ENCODE measurements at regions of chr10 and their contacts with region 1.

Region 1: GRCh38 chr10:69639291-69640195 is 9.5 kb downstream of the FAM241B start:
- DNase-seq: peak; percentile 37 to 75 (median 68)
- ATAC-seq: peak; percentile 61
- H3K4me3 ChIP-seq: no peak overlapping the region
- H3K4me3 Mint-ChIP-seq: no peak overlapping the region
- H3K27ac ChIP-seq: no peak overlapping the region
- H3K27ac Mint-ChIP-seq: peak overlapping the region in 2 of 9 donors; percentile 9 to 10
- H3K4me1 ChIP-seq: no peaks in the 10 kb centered on the region
- H3K4me1 Mint-ChIP-seq: peaks cover 0 to 6% (median 0%) of the 10 kb centered on the region in 7 donors
- H3K27me3 ChIP-seq: no peaks in the 10 kb centered on the region
- H3K27me3 Mint-ChIP-seq: peaks cover 0 to 5% (median 0%) of the 10 kb centered on the region in 5 donors

Region 2: GRCh38 chr10:69222157-69223027 is 417.2 kb before region 1 on chr10:
- CTCF ChIA-PET with region 1: no interaction called
- POLR2A ChIA-PET with region 1: no interaction called
- intact Hi-C with region 1: no loop called
- DNase-seq: peak in 8 of 9 donors; percentile 21 to 80 (median 41)
- ATAC-seq: peak; percentile 88
- H3K4me3 ChIP-seq: peak overlapping the region; percentile 34
- H3K4me3 Mint-ChIP-seq: peak overlapping the region in 4 of 10 donors; percentile 17 to 83 (median 50)
- H3K27ac ChIP-seq: no peak overlapping the region
- H3K27ac Mint-ChIP-seq: peak overlapping the region in 4 of 9 donors; percentile 18 to 91 (median 56)
- H3K4me1 ChIP-seq: peaks cover 11 to 37% of the 10 kb centered on the region in 2 donors
- H3K4me1 Mint-ChIP-seq: peaks cover 0 to 47% (median 15%) of the 10 kb centered on the region in 7 donors
- H3K27me3 ChIP-seq: no peaks in the 10 kb centered on the region
- H3K27me3 Mint-ChIP-seq: no peaks in the 10 kb centered on the region

Region 3: DNA sequence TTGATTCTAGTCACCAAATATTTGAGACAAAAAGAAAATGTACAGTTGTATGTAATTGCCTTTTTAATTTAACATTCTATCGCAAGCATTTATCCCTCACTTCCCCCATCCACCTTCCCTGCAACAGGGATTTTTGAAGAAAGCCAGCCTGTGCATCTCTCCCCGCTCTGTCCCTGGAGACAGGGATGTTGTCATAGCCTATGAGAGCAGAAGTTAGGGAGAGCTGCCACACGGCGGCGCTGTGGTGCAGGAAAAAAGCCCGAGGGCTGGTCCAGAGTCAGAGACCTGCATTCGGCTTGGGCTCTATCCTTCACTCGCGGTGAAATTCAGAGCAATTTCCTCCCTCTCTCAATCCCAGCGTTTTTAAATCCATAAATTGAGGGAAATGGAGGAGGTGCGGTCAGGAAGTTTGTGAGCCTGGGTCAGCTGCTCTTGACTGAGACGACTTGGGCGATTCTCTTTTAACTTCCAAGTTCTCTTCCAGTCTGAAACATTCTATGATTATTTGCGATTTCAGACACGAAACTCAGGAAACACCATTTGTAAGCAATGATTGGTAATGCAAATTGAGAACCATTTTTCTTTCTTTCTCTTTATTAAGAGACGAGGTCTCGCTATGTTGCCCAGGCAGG is 401.9 kb before region 1 on chr10:
- CTCF ChIA-PET with region 1: no interaction called
- POLR2A ChIA-PET with region 1: no interaction called
- intact Hi-C with region 1: loop called (anchors 5 to 10 kb)
- DNase-seq: peak; percentile 67 to 88 (median 79)
- ATAC-seq: peak; percentile 93
- H3K4me3 ChIP-seq: no peak overlapping the region
- H3K4me3 Mint-ChIP-seq: peak overlapping the region in 4 of 10 donors; percentile 9 to 36 (median 10)
- H3K27ac ChIP-seq: no peak overlapping the region
- H3K27ac Mint-ChIP-seq: peak overlapping the region in 6 of 9 donors; percentile 2 to 78 (median 20)
- H3K4me1 ChIP-seq: peaks cover 4 to 6% of the 10 kb centered on the region in 2 donors
- H3K4me1 Mint-ChIP-seq: peaks cover 8 to 37% (median 23%) of the 10 kb centered on the region in 7 donors
- H3K27me3 ChIP-seq: no peaks in the 10 kb centered on the region
- H3K27me3 Mint-ChIP-seq: no peaks in the 10 kb centered on the region

Region 4: GRCh38 chr10:69425511-69426298 is 213.8 kb before region 1 on chr10:
- CTCF ChIA-PET with region 1: no interaction called
- POLR2A ChIA-PET with region 1: no interaction called
- intact Hi-C with region 1: loop called in 1 of 2 experiments (anchors 5 kb)
- DNase-seq: peak in 7 of 9 donors; percentile 60 to 82 (median 74)
- ATAC-seq: peak; percentile 90
- H3K4me3 ChIP-seq: peak overlapping the region; percentile 22
- H3K4me3 Mint-ChIP-seq: peak overlapping the region; percentile 4 to 64 (median 36)
- H3K27ac ChIP-seq: peak overlapping the region; percentile 54
- H3K27ac Mint-ChIP-seq: peak overlapping the region; percentile 45 to 92 (median 88)
- H3K4me1 ChIP-seq: peaks cover 29 to 46% of the 10 kb centered on the region in 2 donors
- H3K4me1 Mint-ChIP-seq: peaks cover 40 to 66% (median 55%) of the 10 kb centered on the region in 7 donors
- H3K27me3 ChIP-seq: no peaks in the 10 kb centered on the region
- H3K27me3 Mint-ChIP-seq: peaks cover 0 to 7% (median 0%) of the 10 kb centered on the region in 5 donors

Region 5: DNA sequence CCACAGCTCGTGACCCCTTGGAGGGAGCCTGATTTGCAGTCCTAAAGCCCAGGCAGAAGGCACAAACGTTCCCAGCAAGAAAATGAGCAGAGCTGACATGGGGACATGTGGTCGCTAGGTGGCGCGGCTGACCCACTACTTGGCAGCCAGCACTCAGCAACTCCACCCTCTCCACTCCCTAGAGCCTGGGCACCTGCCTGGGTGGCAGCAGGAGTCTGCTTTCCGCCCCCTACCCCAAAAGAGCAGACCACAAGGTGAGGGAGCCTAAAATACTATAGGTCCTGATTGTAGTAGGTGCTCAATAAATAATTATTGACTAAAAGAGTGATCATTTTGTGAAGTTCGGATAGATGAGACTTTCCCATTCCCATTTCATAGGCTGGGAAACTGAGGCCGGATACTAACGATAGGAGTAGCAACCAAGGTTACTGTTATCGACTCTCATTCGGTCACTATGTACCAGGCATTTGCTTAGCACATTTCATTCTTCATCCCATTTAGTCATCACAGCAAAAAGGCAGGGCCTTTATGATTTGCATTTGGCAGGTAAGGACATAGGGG is 123.8 kb before region 1 on chr10:
- CTCF ChIA-PET with region 1: interaction called, 225 read pairs
- POLR2A ChIA-PET with region 1: interaction called, 7 read pairs
- intact Hi-C with region 1: loop called (anchors 1 kb)
- DNase-seq: peak; percentile 65 to 82 (median 76)
- ATAC-seq: peak; percentile 92
- H3K4me3 ChIP-seq: no peak overlapping the region
- H3K4me3 Mint-ChIP-seq: no peak overlapping the region
- H3K27ac ChIP-seq: no peak overlapping the region
- H3K27ac Mint-ChIP-seq: no peak overlapping the region
- H3K4me1 ChIP-seq: no peaks in the 10 kb centered on the region
- H3K4me1 Mint-ChIP-seq: no peaks in the 10 kb centered on the region
- H3K27me3 ChIP-seq: no peaks in the 10 kb centered on the region
- H3K27me3 Mint-ChIP-seq: peaks cover 5 to 36% (median 12%) of the 10 kb centered on the region in 5 donors

Region 6: GRCh38 chr10:69527961-69528360 is 111.6 kb before region 1 on chr10:
- CTCF ChIA-PET with region 1: interaction called, 10 read pairs
- POLR2A ChIA-PET with region 1: no interaction called
- intact Hi-C with region 1: no loop called
- DNase-seq: no peak
- ATAC-seq: no peak
- H3K4me3 ChIP-seq: no peak overlapping the region
- H3K4me3 Mint-ChIP-seq: no peak overlapping the region
- H3K27ac ChIP-seq: no peak overlapping the region
- H3K27ac Mint-ChIP-seq: no peak overlapping the region
- H3K4me1 ChIP-seq: no peaks in the 10 kb centered on the region
- H3K4me1 Mint-ChIP-seq: no peaks in the 10 kb centered on the region
- H3K27me3 ChIP-seq: no peaks in the 10 kb centered on the region
- H3K27me3 Mint-ChIP-seq: peaks cover 0 to 34% (median 3%) of the 10 kb centered on the region in 5 donors

Region 7: GRCh38 chr10:69663369-69663947 is 23.9 kb after region 1 on chr10:
- CTCF ChIA-PET with region 1: no interaction called
- POLR2A ChIA-PET with region 1: no interaction called
- intact Hi-C with region 1: no loop called
- DNase-seq: no peak
- ATAC-seq: no peak
- H3K4me3 ChIP-seq: no peak overlapping the region
- H3K4me3 Mint-ChIP-seq: no peak overlapping the region
- H3K27ac ChIP-seq: no peak overlapping the region
- H3K27ac Mint-ChIP-seq: no peak overlapping the region
- H3K4me1 ChIP-seq: no peaks in the 10 kb centered on the region
- H3K4me1 Mint-ChIP-seq: peaks cover 0 to 4% (median 0%) of the 10 kb centered on the region in 7 donors
- H3K27me3 ChIP-seq: no peaks in the 10 kb centered on the region
- H3K27me3 Mint-ChIP-seq: peaks cover 3 to 19% (median 9%) of the 10 kb centered on the region in 5 donors

Region 8: DNA sequence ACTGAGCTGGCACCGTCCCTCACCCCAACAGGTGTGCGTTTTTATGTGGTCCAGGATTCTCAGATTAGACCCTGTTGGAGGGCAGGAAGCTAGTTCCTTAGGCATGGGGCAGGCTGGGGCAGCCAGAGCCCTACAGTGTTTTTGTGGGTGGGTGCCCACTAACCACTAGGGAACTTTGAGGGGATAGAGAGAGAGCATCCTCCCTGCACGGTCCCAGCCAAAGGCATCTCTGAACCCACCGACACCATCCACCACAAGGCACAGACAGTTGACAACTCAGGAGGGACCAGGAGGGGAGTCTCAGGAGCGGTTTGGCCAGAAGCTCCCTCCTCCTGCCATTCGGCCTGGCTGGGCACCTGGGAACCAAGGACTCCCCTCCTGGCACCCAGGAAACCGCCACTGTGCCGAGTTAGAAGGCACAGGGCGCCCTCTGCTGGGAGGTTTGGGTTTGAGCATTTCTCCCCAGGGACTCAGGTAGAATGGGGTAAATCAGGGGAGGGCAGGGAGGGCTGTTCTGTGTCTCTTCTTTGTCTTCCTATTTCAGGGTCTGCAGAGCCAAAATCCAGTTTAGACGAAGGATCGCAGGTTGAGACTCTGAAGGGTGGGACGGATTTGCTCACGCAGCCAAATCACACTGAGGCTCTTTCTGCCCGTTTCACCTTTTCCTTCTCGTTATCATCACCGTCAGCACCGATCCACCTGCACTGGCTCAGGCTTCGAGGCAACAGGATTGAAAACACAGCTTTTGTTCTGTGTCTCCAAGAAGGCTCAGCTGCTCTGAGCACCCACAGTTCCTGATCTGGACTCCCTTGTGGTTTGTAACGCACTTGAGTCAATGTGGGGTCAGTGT is 77.4 kb after region 1 on chr10:
- CTCF ChIA-PET with region 1: interaction called, 4 read pairs
- POLR2A ChIA-PET with region 1: no interaction called
- intact Hi-C with region 1: loop called (anchors 1 kb)
- DNase-seq: peak in 7 of 9 donors; percentile 20 to 65 (median 33)
- ATAC-seq: peak; percentile 50
- H3K4me3 ChIP-seq: no peak overlapping the region
- H3K4me3 Mint-ChIP-seq: no peak overlapping the region
- H3K27ac ChIP-seq: no peak overlapping the region
- H3K27ac Mint-ChIP-seq: no peak overlapping the region
- H3K4me1 ChIP-seq: no peaks in the 10 kb centered on the region
- H3K4me1 Mint-ChIP-seq: no peaks in the 10 kb centered on the region
- H3K27me3 ChIP-seq: no peaks in the 10 kb centered on the region
- H3K27me3 Mint-ChIP-seq: peaks cover 0 to 18% (median 10%) of the 10 kb centered on the region in 5 donors

Region 9: DNA sequence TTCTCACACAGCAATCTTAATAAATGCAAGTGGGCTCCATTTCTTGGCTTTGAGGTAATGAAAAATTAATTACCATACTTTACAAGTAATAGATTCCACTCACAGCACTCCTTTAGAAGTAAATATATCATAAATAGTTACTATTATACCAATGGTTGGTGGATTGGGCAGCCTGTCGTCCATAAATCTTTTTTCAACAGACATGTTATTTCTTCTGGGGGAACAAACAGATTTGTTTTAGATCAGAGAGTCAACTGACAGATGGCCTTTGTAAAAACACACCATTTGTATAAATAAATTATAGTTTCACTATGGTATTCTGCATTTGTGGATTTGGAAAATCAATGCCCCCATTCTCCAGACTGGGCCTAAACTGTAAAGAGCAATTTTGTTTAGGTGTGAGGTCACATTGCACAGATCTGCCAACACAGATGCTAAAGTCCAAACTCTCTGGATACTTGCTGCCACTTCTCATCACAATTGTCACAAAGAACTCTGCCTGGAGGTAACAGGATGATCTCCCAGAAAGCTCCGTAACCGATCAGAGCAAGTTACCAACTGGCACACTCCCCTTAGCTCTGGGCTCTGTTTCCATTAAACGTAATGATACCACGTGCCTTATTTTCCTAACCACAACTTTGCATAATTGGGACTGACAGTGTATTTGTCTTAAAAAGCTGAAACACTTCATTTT is 408.6 kb after region 1 on chr10:
- CTCF ChIA-PET with region 1: no interaction called
- POLR2A ChIA-PET with region 1: no interaction called
- intact Hi-C with region 1: no loop called
- DNase-seq: no peak
- ATAC-seq: no peak
- H3K4me3 ChIP-seq: no peak overlapping the region
- H3K4me3 Mint-ChIP-seq: no peak overlapping the region
- H3K27ac ChIP-seq: no peak overlapping the region
- H3K27ac Mint-ChIP-seq: no peak overlapping the region
- H3K4me1 ChIP-seq: peaks cover 0 to 3% of the 10 kb centered on the region in 2 donors
- H3K4me1 Mint-ChIP-seq: peaks cover 5 to 16% (median 8%) of the 10 kb centered on the region in 7 donors
- H3K27me3 ChIP-seq: peaks cover 0 to 14% of the 10 kb centered on the region in 2 donors
- H3K27me3 Mint-ChIP-seq: peaks cover 30 to 50% (median 35%) of the 10 kb centered on the region in 5 donors

Region 10: GRCh38 chr10:70324339-70324861 is 684.9 kb after region 1 on chr10:
- CTCF ChIA-PET with region 1: no interaction called
- POLR2A ChIA-PET with region 1: no interaction called
- intact Hi-C with region 1: no loop called
- DNase-seq: no peak
- ATAC-seq: peak; percentile 53
- H3K4me3 ChIP-seq: no peak overlapping the region
- H3K4me3 Mint-ChIP-seq: peak overlapping the region in 1 of 10 donors; percentile 16
- H3K27ac ChIP-seq: no peak overlapping the region
- H3K27ac Mint-ChIP-seq: peak overlapping the region in 2 of 9 donors; percentile 12 to 51
- H3K4me1 ChIP-seq: peaks cover 0 to 19% of the 10 kb centered on the region in 2 donors
- H3K4me1 Mint-ChIP-seq: peaks cover 0 to 35% (median 18%) of the 10 kb centered on the region in 7 donors
- H3K27me3 ChIP-seq: no peaks in the 10 kb centered on the region
- H3K27me3 Mint-ChIP-seq: peaks cover 0 to 3% (median 0%) of the 10 kb centered on the region in 5 donors

Measured in naive thymus-derived CD4-positive, alpha-beta T cell (primary cell).